ENCODE measurements at regions of chr1 and their contacts with region 1.

Region 1: GRCh38 chr1:21508580-21509350 is 458 bp upstream of the ALPL start:
- DNase-seq: no peak
- H3K4me3 ChIP-seq: peak overlapping the region; percentile 36 to 53 (median 40)
- H3K27ac ChIP-seq: no peak overlapping the region
- H3K4me1 ChIP-seq: peaks cover 17 to 40% (median 23%) of the 10 kb centered on the region in 4 donors
- H3K27me3 ChIP-seq: peaks cover 0 to 68% (median 18%) of the 10 kb centered on the region in 4 donors
- CTCF ChIP-seq: peak; percentile 50 to 68 (median 52)
- EP300 ChIP-seq: no peak
- POLR2A ChIP-seq: no peak

Region 2: GRCh38 chr1:21270086-21270689 is 238.6 kb before region 1 on chr1:
- intact Hi-C with region 1: no loop called
- DNase-seq: no peak
- H3K4me3 ChIP-seq: no peak overlapping the region
- H3K27ac ChIP-seq: no peak overlapping the region
- H3K4me1 ChIP-seq: peaks cover 38 to 52% (median 47%) of the 10 kb centered on the region in 4 donors
- H3K27me3 ChIP-seq: no peaks in the 10 kb centered on the region
- CTCF ChIP-seq: peak; percentile 78 to 96 (median 84)
- EP300 ChIP-seq: no peak
- POLR2A ChIP-seq: no peak

Region 3: DNA sequence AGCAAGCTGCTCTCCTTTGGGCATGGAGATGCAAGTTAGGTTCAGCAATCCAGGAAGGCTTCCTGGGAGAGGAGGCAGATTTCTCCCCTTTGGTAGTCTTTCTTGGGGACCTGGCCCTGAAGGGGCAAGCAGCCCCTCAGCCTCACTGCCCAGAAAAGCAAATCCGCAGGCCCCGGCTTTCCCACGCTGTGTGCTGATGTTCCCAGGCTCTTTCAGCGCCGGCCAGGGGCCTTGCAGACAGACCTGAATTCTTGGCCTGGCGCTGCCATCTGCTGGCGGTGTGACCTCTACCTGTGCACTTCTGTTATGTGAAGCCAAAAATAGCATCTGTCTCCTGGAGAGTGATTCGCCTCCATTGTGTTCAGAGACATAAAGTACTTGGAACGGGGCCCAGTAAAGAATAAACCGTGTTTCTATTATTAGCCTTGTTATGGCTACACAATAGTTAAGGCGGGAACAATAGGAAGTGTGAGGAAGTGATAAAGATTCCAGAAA is 65.3 kb after region 1 on chr1:
- intact Hi-C with region 1: loop called (anchors 2 kb)
- DNase-seq: no peak
- H3K4me3 ChIP-seq: no peak overlapping the region
- H3K27ac ChIP-seq: peak overlapping the region; percentile 78 to 87 (median 82)
- H3K4me1 ChIP-seq: peaks cover 21 to 26% (median 22%) of the 10 kb centered on the region in 4 donors
- H3K27me3 ChIP-seq: no peaks in the 10 kb centered on the region
- CTCF ChIP-seq: peak; percentile 53 to 78 (median 59)
- EP300 ChIP-seq: no peak
- POLR2A ChIP-seq: no peak

Region 4: GRCh38 chr1:21659099-21659923 is 150.5 kb after region 1 on chr1:
- intact Hi-C with region 1: loop called (anchors 2 kb)
- DNase-seq: no peak
- H3K4me3 ChIP-seq: peak overlapping the region in 3 of 4 donors; percentile 3 to 15 (median 9)
- H3K27ac ChIP-seq: no peak overlapping the region
- H3K4me1 ChIP-seq: peaks cover 3 to 9% (median 6%) of the 10 kb centered on the region in 4 donors
- H3K27me3 ChIP-seq: peaks cover 0 to 54% (median 5%) of the 10 kb centered on the region in 4 donors
- CTCF ChIP-seq: peak; percentile 89 to 97 (median 95)
- EP300 ChIP-seq: no peak
- POLR2A ChIP-seq: no peak